IMR-90 (cell line): ENCODE measurements at regions of chr11 and their contacts with region 1.

Region 1: DNA sequence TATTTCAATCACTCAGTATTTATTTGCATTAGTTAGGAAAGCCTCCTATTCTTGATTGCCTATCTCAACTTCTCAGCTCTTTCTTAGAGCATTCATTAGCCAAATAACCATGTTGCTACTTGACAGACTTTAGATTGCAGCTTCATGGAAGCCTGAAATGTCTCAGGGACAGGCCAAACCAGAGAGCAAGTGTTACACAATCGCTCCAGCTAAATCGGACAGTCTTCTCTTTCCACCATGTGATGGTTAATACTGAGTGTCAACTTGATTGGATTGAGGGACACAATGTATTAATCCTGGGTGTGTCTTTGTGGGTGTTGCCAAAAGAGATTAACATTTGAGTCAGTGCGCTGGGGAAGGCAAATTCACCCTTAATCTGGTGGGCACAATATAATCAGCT is 106.5 kb upstream of the DRD2 start:
- DNase-seq: no peak
- ATAC-seq: no peak
- H3K4me3 ChIP-seq: no peak overlapping the region
- H3K27ac ChIP-seq: no peak overlapping the region
- H3K4me1 ChIP-seq: no peaks in the 10 kb centered on the region
- H3K27me3 ChIP-seq: peaks cover 15% of the 10 kb centered on the region
- CTCF ChIP-seq: no peak
- POLR2A ChIP-seq: no peak
- RAD21 ChIP-seq: no peak

Region 2: GRCh38 chr11:113481672-113482071 is 100.0 kb before region 1 on chr11:
- CTCF ChIA-PET with region 1: no interaction called
- POLR2A ChIA-PET with region 1: no interaction called
- dilution Hi-C with region 1: no loop called
- in situ Hi-C with region 1: no loop called
- intact Hi-C with region 1: no loop called
- DNase-seq: no peak
- ATAC-seq: no peak
- H3K4me3 ChIP-seq: no peak overlapping the region
- H3K27ac ChIP-seq: no peak overlapping the region
- H3K4me1 ChIP-seq: no peaks in the 10 kb centered on the region
- H3K27me3 ChIP-seq: peaks cover 7% of the 10 kb centered on the region
- CTCF ChIP-seq: no peak
- POLR2A ChIP-seq: no peak
- RAD21 ChIP-seq: no peak

Region 3: DNA sequence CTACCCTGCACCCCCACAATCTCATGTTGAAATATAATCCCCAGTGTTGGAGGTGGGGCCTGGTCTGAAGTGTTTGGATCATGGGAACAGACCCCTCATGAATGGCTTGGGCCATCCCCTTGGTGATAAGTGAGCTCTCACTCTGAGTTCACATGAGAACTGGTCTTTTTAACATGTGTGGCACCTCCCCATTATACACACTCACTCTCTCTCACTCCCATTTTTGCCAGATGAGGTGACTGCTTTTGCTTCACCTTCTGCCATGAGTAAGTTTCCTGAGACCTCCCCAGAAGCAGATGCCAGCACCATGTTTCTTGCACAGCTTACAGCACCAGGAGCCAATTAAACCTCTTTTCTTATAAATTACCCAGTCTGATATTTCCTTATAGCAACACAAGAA is 74.4 kb before region 1 on chr11:
- CTCF ChIA-PET with region 1: no interaction called
- POLR2A ChIA-PET with region 1: no interaction called
- dilution Hi-C with region 1: no loop called
- in situ Hi-C with region 1: no loop called
- intact Hi-C with region 1: no loop called
- DNase-seq: no peak
- ATAC-seq: no peak
- H3K4me3 ChIP-seq: no peak overlapping the region
- H3K27ac ChIP-seq: no peak overlapping the region
- H3K4me1 ChIP-seq: no peaks in the 10 kb centered on the region
- H3K27me3 ChIP-seq: peaks cover 2% of the 10 kb centered on the region
- CTCF ChIP-seq: no peak
- POLR2A ChIP-seq: no peak
- RAD21 ChIP-seq: no peak

Region 4: DNA sequence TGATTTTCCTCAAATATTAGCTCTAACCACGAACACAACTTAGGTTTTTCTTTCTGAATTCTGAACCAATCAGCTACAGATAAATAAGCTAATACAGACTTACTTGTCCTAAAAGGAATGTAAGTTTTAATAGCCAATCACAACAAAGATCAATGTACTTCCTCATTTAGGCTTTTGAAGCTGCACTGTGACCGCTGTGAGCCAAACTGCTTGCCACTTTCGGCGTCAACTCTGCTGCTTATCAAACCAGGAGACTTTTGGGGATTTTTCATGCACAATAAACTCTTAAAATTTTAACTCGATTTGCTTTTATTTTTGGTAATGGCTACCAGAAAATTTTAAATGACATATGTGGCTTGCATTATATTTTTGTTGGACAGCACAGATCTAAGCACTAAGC is 31.9 kb after region 1 on chr11:
- CTCF ChIA-PET with region 1: no interaction called
- POLR2A ChIA-PET with region 1: interaction called, 18 read pairs
- dilution Hi-C with region 1: no loop called
- in situ Hi-C with region 1: no loop called
- intact Hi-C with region 1: no loop called
- DNase-seq: no peak
- ATAC-seq: no peak
- H3K4me3 ChIP-seq: no peak overlapping the region
- H3K27ac ChIP-seq: no peak overlapping the region
- H3K4me1 ChIP-seq: no peaks in the 10 kb centered on the region
- H3K27me3 ChIP-seq: no peaks in the 10 kb centered on the region
- CTCF ChIP-seq: no peak
- POLR2A ChIP-seq: no peak
- RAD21 ChIP-seq: no peak